ENCODE measurements at regions of chr1 and their contacts with region 1.

Region 1: DNA sequence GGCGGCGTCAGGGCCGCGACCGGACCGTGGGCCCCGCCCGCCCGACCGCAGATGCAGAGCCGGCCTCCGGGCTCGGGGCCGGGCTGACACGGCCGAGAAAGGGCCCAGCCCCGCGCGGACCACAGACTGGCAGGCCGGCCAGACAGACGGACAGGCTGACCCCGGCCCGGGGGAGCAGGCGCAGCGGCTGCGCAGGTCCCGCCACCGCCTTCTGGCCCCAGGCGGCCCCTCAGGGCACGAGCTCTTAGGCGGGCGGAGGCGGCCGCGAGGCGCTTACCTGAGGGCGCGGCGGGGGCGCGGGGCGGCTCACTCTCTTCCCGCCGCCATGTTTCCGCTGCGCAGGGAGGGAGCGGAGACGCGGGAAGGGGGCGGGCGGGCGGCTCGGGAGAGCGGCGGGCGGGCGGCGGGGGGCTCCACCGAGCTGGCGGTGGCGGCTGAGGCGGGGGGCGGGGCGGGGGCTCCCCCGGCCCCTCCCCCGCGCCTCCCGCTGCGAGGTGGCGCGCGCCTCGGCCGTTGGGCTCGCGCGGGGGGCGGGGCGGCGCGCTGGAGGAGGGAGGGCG is at the start of gene SCMH1:
- DNase-seq: no peak
- total RNA-seq, gene SCMH1: 47.3 TPM

Region 2: GRCh38 chr1:41045740-41046139 is 196.1 kb before region 1 on chr1:
- intact Hi-C with region 1: loop called (anchors 10 kb)
- DNase-seq: no peak

Region 3: DNA sequence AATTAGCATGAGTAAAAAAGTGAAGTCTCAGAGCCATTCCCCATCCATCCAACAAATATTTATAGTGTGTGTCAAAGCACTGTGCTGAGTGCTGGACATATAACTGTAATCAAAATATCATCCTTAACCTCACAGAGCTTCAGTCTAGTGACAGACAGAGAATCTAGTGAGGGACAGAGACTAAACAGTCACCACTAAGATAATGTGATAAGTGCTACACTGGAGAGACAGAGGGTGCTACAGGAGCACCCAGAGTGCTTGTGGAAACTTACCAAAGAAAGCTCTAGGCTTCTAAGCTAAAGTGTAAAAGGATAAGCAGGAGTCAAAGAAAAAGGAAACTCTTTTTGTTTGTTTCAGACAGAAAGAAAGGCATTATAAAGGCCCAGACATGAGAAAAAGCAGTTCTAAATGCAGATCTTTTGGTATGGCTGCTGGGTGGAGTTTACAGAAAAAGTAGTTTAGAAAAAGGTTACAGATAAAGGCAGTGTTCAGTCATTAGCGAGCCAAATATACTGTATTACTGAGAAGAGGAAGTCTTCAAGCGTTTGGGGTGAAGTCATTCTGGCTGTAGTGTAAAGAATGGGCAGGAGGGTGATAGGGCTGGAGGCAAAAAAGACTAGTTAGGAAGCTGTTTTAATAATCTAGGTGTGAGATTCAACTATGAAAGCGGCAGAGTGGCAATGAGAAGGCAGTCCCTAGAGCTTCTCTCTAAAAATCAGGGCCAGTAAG is 83.6 kb before region 1 on chr1:
- intact Hi-C with region 1: loop called (anchors 5 kb)
- DNase-seq: no peak

Region 4: GRCh38 chr1:41184451-41184850 is 57.4 kb before region 1 on chr1:
- intact Hi-C with region 1: no loop called
- DNase-seq: no peak